Activated CD8-positive, alpha-beta T cell treated with anti-CD3 and anti-CD28 coated beads, Interleukin-2, amount 10 ng/mL, durations not matched to agents 7 days and 5 days (primary cell): ENCODE measurements at regions of chr1 and their contacts with region 1.

Region 1: GRCh38 chr1:45512641-45513054 is 9.0 kb downstream of the PRDX1 start:
- DNase-seq: peak; percentile 75
- ATAC-seq: peak; percentile 74
- H3K4me3 Mint-ChIP-seq: no peak overlapping the region
- H3K27ac Mint-ChIP-seq: no peak overlapping the region
- H3K4me1 Mint-ChIP-seq: no peaks in the 10 kb centered on the region
- H3K27me3 Mint-ChIP-seq: no peaks in the 10 kb centered on the region

Region 2: DNA sequence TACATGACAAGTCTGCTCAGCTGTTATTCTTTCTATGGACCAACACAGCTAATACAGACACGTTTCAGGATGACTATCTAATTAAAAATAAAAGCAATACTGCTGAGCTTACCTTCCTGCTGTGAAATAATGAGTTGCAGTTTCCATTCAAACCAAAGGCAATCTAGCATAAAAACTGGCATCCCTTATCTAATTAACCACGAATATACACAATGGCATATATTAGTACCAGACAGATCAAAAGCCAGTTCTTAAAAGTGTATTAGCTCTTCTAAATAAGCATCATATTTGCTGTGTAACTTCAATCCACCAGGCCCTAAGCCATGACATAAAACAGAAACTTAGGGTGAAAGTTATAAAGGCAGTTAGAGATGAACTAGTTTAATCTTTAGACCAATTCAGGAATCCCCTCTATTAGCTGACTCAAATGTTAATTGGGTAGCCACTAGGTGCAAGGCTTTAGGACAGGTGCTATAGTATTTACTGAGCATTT is 42.3 kb before region 1 on chr1:
- CTCF ChIA-PET with region 1: no interaction called
- POLR2A ChIA-PET with region 1: no interaction called
- DNase-seq: no peak
- ATAC-seq: no peak
- H3K4me3 Mint-ChIP-seq: no peak overlapping the region
- H3K27ac Mint-ChIP-seq: no peak overlapping the region
- H3K4me1 Mint-ChIP-seq: no peaks in the 10 kb centered on the region
- H3K27me3 Mint-ChIP-seq: no peaks in the 10 kb centered on the region

Region 3: DNA sequence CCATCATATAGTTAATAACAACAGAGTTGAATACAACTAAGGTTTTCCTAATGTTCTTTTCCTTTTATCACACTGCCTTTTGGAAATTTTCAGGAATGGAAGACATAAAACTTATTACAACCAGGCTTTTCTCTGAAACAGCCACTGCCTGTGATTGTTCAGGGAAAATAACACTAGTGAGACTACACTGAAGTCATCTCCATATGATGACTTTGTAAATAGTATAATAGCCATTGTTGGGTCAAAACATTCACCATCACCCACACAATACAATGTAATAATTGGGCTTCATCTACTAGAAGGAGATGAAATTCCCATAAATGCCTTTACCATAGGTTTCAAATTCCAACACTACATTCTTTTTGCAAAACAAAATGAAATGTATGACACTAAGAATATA is 26.7 kb before region 1 on chr1:
- CTCF ChIA-PET with region 1: no interaction called
- POLR2A ChIA-PET with region 1: no interaction called
- DNase-seq: no peak
- ATAC-seq: no peak
- H3K4me3 Mint-ChIP-seq: no peak overlapping the region
- H3K27ac Mint-ChIP-seq: no peak overlapping the region
- H3K4me1 Mint-ChIP-seq: peaks cover 3% of the 10 kb centered on the region
- H3K27me3 Mint-ChIP-seq: peaks cover 5% of the 10 kb centered on the region

Region 4: GRCh38 chr1:45499415-45499769 is 13.3 kb before region 1 on chr1:
- CTCF ChIA-PET with region 1: interaction called, 36 read pairs
- POLR2A ChIA-PET with region 1: interaction called, 9 read pairs
- DNase-seq: no peak
- ATAC-seq: peak; percentile 7
- H3K4me3 Mint-ChIP-seq: peak overlapping the region; percentile 94
- H3K27ac Mint-ChIP-seq: peak overlapping the region; percentile 89
- H3K4me1 Mint-ChIP-seq: peaks cover 28% of the 10 kb centered on the region
- H3K27me3 Mint-ChIP-seq: no peaks in the 10 kb centered on the region

Region 5: DNA sequence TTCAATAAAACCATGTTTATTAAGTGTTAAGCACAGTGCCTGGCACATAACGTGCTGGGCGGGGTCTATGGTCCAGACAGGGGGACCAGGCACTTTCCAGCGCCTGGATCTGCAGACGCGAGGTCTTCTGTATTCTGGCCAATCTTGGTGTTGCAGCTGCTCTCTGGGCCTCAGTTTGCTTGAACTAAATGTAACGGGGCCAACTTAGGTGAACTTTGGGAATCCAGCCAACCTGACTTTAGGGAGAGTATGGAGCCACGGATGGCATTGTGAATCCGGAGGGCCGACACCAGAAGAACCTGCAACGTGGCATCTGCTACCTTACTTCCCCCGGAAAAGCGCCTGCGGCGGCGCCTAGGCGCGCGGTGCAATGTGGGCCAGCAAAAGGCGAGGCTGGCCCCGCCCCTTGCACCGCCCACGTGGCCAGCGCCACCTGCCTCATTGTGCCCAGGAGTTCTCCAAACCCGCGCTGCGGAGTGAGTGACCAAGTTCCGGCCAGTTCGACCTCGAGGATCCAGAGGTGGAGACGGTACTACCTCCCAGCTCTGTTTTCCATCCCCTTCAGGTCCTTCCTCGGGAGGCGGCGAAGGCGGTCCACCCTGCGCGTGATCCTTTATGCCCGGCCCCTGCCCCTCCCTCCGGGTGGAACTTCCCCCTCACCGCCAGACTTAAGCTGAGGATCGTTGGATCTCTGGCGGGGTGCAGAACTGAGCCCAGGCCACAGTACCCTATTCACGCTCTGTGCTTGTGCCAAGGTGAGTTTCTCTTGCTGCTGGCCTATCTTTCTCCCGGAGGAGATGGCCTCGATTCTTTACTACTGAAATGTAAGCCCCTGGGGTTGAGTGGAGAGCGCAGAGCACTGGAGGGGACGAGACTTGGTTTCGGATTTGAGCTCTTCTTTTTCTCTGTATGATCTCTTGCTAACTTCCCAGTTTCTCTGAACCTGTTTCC is 38.0 kb after region 1 on chr1 and contains the start of gene AKR1A1:
- CTCF ChIA-PET with region 1: interaction called, 19 read pairs
- POLR2A ChIA-PET with region 1: interaction called, 4 read pairs
- DNase-seq: peak; percentile 90
- ATAC-seq: peak; percentile 96
- H3K4me3 Mint-ChIP-seq: peak within 1 kb of the TSS; percentile 94
- H3K27ac Mint-ChIP-seq: peak within 1 kb of the TSS; percentile 91
- H3K4me1 Mint-ChIP-seq: peaks cover 25% of the 10 kb centered on the region
- H3K27me3 Mint-ChIP-seq: no peaks in the 10 kb centered on the region
- total RNA-seq, gene AKR1A1: 150 to 152 TPM

Region 6: GRCh38 chr1:45785583-45785982 is 272.9 kb after region 1 on chr1:
- CTCF ChIA-PET with region 1: no interaction called
- POLR2A ChIA-PET with region 1: no interaction called
- DNase-seq: peak; percentile 77
- ATAC-seq: peak; percentile 100
- H3K4me3 Mint-ChIP-seq: peak overlapping the region; percentile 62
- H3K27ac Mint-ChIP-seq: peak overlapping the region; percentile 67
- H3K4me1 Mint-ChIP-seq: peaks cover 28% of the 10 kb centered on the region
- H3K27me3 Mint-ChIP-seq: peaks cover 43% of the 10 kb centered on the region